Natural killer cell (primary cell): ENCODE measurements at regions of chr3 and their contacts with region 1.

Region 1: GRCh38 chr3:72938471-72939265 is 50.8 kb downstream of the GXYLT2 start:
- DNase-seq: peak in 1 of 2 donors; percentile 73
- ATAC-seq: peak; percentile 90 to 98 (median 93)
- H3K4me3 ChIP-seq: no peak overlapping the region
- H3K4me3 Mint-ChIP-seq: no peak overlapping the region
- H3K27ac ChIP-seq: no peak overlapping the region
- H3K27ac Mint-ChIP-seq: no peak overlapping the region
- H3K4me1 ChIP-seq: no peaks in the 10 kb centered on the region
- H3K4me1 Mint-ChIP-seq: no peaks in the 10 kb centered on the region
- H3K27me3 ChIP-seq: no peaks in the 10 kb centered on the region
- H3K27me3 Mint-ChIP-seq: peaks cover 3 to 15% of the 10 kb centered on the region in 2 donors
- CTCF ChIP-seq: peak; percentile 66

Region 2: GRCh38 chr3:72571638-72572208 is 366.9 kb before region 1 on chr3:
- intact Hi-C with region 1: no loop called
- DNase-seq: no peak
- ATAC-seq: no peak
- H3K4me3 ChIP-seq: no peak overlapping the region
- H3K4me3 Mint-ChIP-seq: no peak overlapping the region
- H3K27ac ChIP-seq: no peak overlapping the region
- H3K27ac Mint-ChIP-seq: no peak overlapping the region
- H3K4me1 ChIP-seq: no peaks in the 10 kb centered on the region
- H3K4me1 Mint-ChIP-seq: no peaks in the 10 kb centered on the region
- H3K27me3 ChIP-seq: no peaks in the 10 kb centered on the region
- H3K27me3 Mint-ChIP-seq: no peaks in the 10 kb centered on the region
- CTCF ChIP-seq: no peak

Region 3: GRCh38 chr3:73086071-73086494 is 147.4 kb after region 1 on chr3:
- intact Hi-C with region 1: loop called (anchors 1 kb)
- DNase-seq: peak; percentile 23 to 74
- ATAC-seq: peak; percentile 62 to 78 (median 77)
- H3K4me3 ChIP-seq: no peak overlapping the region
- H3K4me3 Mint-ChIP-seq: no peak overlapping the region
- H3K27ac ChIP-seq: no peak overlapping the region
- H3K27ac Mint-ChIP-seq: peak overlapping the region in 1 of 2 donors; percentile 25
- H3K4me1 ChIP-seq: no peaks in the 10 kb centered on the region
- H3K4me1 Mint-ChIP-seq: peaks cover 6% of the 10 kb centered on the region in 2 donors
- H3K27me3 ChIP-seq: no peaks in the 10 kb centered on the region
- H3K27me3 Mint-ChIP-seq: peaks cover 0 to 5% of the 10 kb centered on the region in 2 donors
- CTCF ChIP-seq: peak; percentile 90